ENCODE measurements at regions of chr2 and their contacts with region 1.

Region 1: DNA sequence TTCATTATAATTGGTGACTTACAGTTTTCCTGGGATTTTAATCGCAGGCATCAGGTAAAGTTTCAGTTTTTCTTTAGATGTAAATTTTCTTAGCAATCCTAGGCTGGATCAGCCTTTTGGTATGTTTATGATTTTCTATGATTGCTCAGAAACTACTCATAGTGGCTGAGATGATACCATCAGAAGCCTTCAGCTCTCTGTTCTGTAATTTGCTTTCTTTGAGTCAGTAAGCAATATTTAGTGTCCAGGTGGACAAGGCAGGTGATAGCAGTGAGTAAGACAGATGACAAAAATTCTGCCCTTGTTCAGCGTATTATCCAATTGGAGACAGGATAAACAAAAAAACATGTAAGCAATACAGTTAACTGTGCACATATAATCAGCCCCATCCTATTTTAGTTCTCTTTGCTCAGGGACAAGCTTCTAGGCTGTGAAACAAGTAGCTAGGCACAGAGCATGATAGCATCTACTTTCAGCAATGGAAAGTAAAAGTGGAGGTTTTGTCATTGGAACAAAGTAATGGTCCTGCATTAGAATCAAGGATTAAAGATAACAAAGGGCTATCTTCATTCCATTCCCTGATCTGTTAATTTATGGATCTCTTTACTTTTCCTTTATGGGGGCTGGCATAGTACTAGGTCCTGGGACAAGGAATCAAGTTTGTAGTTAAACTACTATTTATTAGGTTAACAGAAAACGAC is 100.8 kb downstream of the EPC2 start:
- DNase-seq: no peak
- ATAC-seq: no peak
- H3K4me3 ChIP-seq: no peak overlapping the region
- H3K4me3 Mint-ChIP-seq: no peak overlapping the region
- H3K27ac ChIP-seq: no peak overlapping the region
- H3K27ac Mint-ChIP-seq: no peak overlapping the region
- H3K4me1 ChIP-seq: peaks cover 16% of the 10 kb centered on the region
- H3K4me1 Mint-ChIP-seq: peaks cover 68% of the 10 kb centered on the region
- H3K27me3 ChIP-seq: no peaks in the 10 kb centered on the region
- H3K27me3 Mint-ChIP-seq: no peaks in the 10 kb centered on the region
- CTCF ChIP-seq: no peak

Region 2: GRCh38 chr2:148102641-148103040 is 642.7 kb before region 1 on chr2:
- CTCF ChIA-PET with region 1: no interaction called
- POLR2A ChIA-PET with region 1: no interaction called
- intact Hi-C with region 1: no loop called
- DNase-seq: no peak
- ATAC-seq: no peak
- H3K4me3 ChIP-seq: no peak overlapping the region
- H3K4me3 Mint-ChIP-seq: no peak overlapping the region
- H3K27ac ChIP-seq: no peak overlapping the region
- H3K27ac Mint-ChIP-seq: no peak overlapping the region
- H3K4me1 ChIP-seq: no peaks in the 10 kb centered on the region
- H3K4me1 Mint-ChIP-seq: peaks cover 2% of the 10 kb centered on the region
- H3K27me3 ChIP-seq: no peaks in the 10 kb centered on the region
- H3K27me3 Mint-ChIP-seq: no peaks in the 10 kb centered on the region
- CTCF ChIP-seq: no peak

Region 3: GRCh38 chr2:148667113-148667836 is 78.0 kb before region 1 on chr2:
- CTCF ChIA-PET with region 1: no interaction called
- POLR2A ChIA-PET with region 1: no interaction called
- intact Hi-C with region 1: loop called in 1 of 2 experiments (anchors 5 kb)
- DNase-seq: no peak
- ATAC-seq: no peak
- H3K4me3 ChIP-seq: no peak overlapping the region
- H3K4me3 Mint-ChIP-seq: peak overlapping the region; percentile 50
- H3K27ac ChIP-seq: no peak overlapping the region
- H3K27ac Mint-ChIP-seq: no peak overlapping the region
- H3K4me1 ChIP-seq: peaks cover 52% of the 10 kb centered on the region
- H3K4me1 Mint-ChIP-seq: peaks cover 81% of the 10 kb centered on the region
- H3K27me3 ChIP-seq: no peaks in the 10 kb centered on the region
- H3K27me3 Mint-ChIP-seq: no peaks in the 10 kb centered on the region
- CTCF ChIP-seq: no peak

Region 4: GRCh38 chr2:148702475-148702874 is 42.8 kb before region 1 on chr2:
- CTCF ChIA-PET with region 1: no interaction called
- POLR2A ChIA-PET with region 1: no interaction called
- intact Hi-C with region 1: no loop called
- DNase-seq: no peak
- ATAC-seq: no peak
- H3K4me3 ChIP-seq: no peak overlapping the region
- H3K4me3 Mint-ChIP-seq: no peak overlapping the region
- H3K27ac ChIP-seq: no peak overlapping the region
- H3K27ac Mint-ChIP-seq: no peak overlapping the region
- H3K4me1 ChIP-seq: no peaks in the 10 kb centered on the region
- H3K4me1 Mint-ChIP-seq: peaks cover 40% of the 10 kb centered on the region
- H3K27me3 ChIP-seq: no peaks in the 10 kb centered on the region
- H3K27me3 Mint-ChIP-seq: no peaks in the 10 kb centered on the region
- CTCF ChIP-seq: no peak

Region 5: DNA sequence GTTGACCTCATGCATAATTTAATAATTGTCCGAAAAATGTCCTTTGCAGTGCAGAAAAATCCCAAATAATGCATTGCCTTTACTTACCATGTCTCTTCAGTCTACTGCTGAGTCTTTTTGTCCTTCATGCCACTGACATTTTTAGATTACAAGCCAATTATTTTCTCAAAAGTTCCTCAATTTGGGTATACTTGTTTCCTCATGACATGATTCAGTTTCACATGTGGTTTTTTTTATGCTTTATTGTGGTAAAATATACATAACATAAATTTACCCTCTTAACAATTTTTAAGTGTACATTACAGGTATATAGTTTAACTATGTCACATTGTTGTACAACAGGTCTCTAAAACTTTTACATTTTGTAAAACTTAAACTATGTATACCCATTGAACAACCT is 19.7 kb before region 1 on chr2:
- CTCF ChIA-PET with region 1: interaction called, 3 read pairs
- POLR2A ChIA-PET with region 1: no interaction called
- intact Hi-C with region 1: loop called in 1 of 2 experiments (anchors 2 kb)
- DNase-seq: peak in 1 of 9 experiments; percentile 12
- ATAC-seq: no peak
- H3K4me3 ChIP-seq: no peak overlapping the region
- H3K4me3 Mint-ChIP-seq: no peak overlapping the region
- H3K27ac ChIP-seq: no peak overlapping the region
- H3K27ac Mint-ChIP-seq: no peak overlapping the region
- H3K4me1 ChIP-seq: peaks cover 20% of the 10 kb centered on the region
- H3K4me1 Mint-ChIP-seq: peaks cover 72% of the 10 kb centered on the region
- H3K27me3 ChIP-seq: no peaks in the 10 kb centered on the region
- H3K27me3 Mint-ChIP-seq: no peaks in the 10 kb centered on the region
- CTCF ChIP-seq: no peak